Motor neuron (in vitro differentiated cells): ENCODE measurements at regions of chr17 and their contacts with region 1.

Region 1: GRCh38 chr17:29807520-29808351 is 122.3 kb downstream of the SSH2 start:
- ATAC-seq: peak in 7 of 8 experiments; percentile 46 to 86 (median 72)
- H3K4me3 ChIP-seq: no peak overlapping the region
- H3K27ac ChIP-seq: no peak overlapping the region
- H3K4me1 ChIP-seq: no peaks in the 10 kb centered on the region

Region 2: GRCh38 chr17:29645515-29646051 is 162.2 kb before region 1 on chr17:
- in situ Hi-C with region 1: no loop called
- ATAC-seq: peak in 3 of 8 experiments; percentile 46 to 68 (median 56)
- H3K4me3 ChIP-seq: no peak overlapping the region
- H3K27ac ChIP-seq: no peak overlapping the region
- H3K4me1 ChIP-seq: peaks cover 6 to 7% of the 10 kb centered on the region in 2 donors

Region 3: DNA sequence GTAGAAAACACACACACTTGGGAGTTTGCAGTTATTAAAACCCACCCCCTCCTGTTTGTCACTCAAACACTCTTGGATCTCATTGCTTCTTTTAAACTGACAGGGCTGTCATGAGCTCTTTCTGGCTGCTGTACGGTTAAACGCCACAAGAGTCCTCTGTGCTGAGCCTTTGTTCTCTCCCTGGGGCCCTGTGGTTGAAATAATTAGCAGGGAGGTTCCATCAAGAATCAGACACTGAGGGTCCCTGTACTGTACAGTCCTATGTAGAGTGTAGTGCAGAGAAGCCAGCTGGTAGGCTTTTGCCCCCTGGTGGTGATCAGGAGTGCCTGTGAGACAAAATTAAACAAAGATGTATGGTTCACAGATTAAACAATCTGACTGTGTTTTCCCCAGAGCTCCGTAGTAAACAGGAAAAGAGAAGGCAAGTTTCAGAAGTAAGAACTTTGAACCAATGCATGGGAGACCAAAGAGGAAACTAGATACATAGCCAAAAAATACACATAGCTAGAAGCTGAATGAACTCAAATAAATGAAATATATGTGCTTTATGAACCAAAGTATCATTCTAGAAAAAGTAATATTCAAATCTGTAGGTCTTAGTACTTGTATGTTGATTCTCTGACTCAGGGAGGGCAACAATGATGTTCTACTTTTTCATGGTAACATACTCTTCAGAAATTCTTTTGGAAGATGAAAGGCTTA is 123.6 kb after region 1 on chr17:
- in situ Hi-C with region 1: loop called in 7 of 9 experiments (anchors 10 to 25 kb)
- ATAC-seq: peak; percentile 33 to 79 (median 72)
- H3K4me3 ChIP-seq: peak overlapping the region; percentile 57 to 98 (median 89)
- H3K27ac ChIP-seq: peak overlapping the region in 1 of 2 donors; percentile 89
- H3K4me1 ChIP-seq: peaks cover 0 to 19% of the 10 kb centered on the region in 2 donors

Region 4: DNA sequence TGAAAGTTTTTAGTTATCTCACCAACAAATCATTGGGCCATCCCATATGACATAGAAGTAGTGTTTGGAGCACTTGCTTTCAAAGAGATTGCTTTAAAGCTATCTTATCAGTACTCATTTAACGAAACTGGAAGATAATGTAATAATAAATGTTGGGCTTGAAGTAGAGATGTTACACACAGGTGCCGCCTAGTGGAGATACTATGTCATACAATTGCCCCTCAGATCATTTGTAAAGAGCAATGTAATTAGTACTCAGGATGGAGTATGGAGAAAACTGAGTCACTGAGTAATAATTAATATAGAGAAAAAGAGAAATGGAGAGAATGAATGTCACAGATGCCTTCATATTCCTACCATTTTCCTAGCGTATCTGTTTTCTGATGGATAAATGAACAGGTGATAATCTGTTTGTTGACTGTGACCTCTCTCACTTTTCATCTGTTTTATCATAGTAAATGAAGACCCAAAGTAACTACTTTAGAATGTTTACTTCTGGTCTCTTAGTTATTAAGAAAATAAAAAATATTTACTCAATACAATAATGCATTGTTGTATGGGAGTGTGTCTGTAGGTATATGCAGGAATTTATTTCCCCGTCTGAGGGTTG is 214.1 kb after region 1 on chr17:
- in situ Hi-C with region 1: loop called in 2 of 9 experiments (anchors 25 kb)
- ATAC-seq: peak in 3 of 8 experiments; percentile 52 to 60 (median 58)
- H3K4me3 ChIP-seq: no peak overlapping the region
- H3K27ac ChIP-seq: no peak overlapping the region
- H3K4me1 ChIP-seq: no peaks in the 10 kb centered on the region